A673 (cell line): ENCODE measurements at regions of chr3 and their contacts with region 1.

Region 1: GRCh38 chr3:168511428-168512014 is 415.8 kb upstream of the GOLIM4 start:
- DNase-seq: peak; percentile 12
- H3K4me3 ChIP-seq: no peak overlapping the region
- H3K27ac ChIP-seq: no peak overlapping the region
- H3K4me1 ChIP-seq: no peaks in the 10 kb centered on the region
- H3K27me3 ChIP-seq: peaks cover 23% of the 10 kb centered on the region
- CTCF ChIP-seq: peak; percentile 59

Region 2: DNA sequence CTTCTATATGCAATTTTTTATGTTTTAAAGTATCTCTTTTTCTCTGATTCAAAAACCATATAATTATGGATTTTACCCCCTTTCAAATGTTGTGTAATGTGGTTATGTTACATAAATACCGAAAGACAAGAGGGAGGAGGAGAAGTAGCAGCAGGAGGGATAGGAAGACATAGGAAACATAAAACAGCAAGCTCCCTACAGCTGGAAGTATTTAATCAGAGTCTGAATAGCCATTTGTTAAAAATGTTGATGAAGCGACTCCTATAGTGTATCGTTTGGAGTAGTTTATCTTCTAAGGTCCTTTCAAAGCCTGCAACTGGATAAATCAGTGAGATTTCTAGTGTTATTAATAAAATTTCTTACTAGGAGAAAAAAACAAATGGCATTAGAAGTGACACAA is 182.3 kb after region 1 on chr3:
- CTCF ChIA-PET with region 1: no interaction called
- POLR2A ChIA-PET with region 1: no interaction called
- intact Hi-C with region 1: no loop called
- DNase-seq: peak; percentile 11
- H3K4me3 ChIP-seq: no peak overlapping the region
- H3K27ac ChIP-seq: no peak overlapping the region
- H3K4me1 ChIP-seq: no peaks in the 10 kb centered on the region
- H3K27me3 ChIP-seq: peaks cover 36% of the 10 kb centered on the region
- CTCF ChIP-seq: no peak

Region 3: GRCh38 chr3:168847291-168847883 is 335.9 kb after region 1 on chr3:
- CTCF ChIA-PET with region 1: no interaction called
- POLR2A ChIA-PET with region 1: no interaction called
- intact Hi-C with region 1: loop called (anchors 1 kb)
- DNase-seq: peak; percentile 53
- H3K4me3 ChIP-seq: no peak overlapping the region
- H3K27ac ChIP-seq: no peak overlapping the region
- H3K4me1 ChIP-seq: no peaks in the 10 kb centered on the region
- H3K27me3 ChIP-seq: peaks cover 48% of the 10 kb centered on the region
- CTCF ChIP-seq: peak; percentile 68